CD8-positive, alpha-beta T cell (primary cell): ENCODE measurements at regions of chr12 and their contacts with region 1.

Region 1: DNA sequence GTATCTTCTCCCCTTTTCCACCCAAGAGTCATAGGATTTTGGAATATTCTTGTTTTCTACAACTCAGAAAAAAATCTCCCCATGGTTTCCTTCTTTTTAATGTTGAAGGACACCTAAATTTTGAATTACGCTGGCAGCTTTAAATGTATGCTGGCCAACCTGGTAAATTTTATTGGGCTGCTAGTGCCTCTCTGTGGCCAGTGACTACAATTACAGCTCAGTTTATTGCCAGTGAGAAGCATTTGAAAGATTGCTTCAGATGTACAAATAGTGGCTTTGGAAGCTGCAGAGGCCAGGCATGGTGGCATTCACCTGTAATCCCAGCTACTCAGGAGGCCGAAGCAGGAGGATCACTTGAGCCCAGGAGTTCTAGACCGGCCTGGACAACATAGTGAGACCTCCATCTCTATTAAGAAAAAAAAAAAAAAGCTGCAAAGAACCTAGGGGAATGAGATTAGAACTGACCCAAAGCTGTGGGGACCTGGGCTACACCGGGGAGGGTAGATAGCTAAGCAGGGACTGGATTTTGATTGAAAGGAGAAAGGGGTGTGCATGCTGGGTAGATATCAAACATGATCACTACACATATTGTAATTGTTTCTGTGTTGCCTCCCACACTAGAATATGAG is 7.6 kb upstream of the RAB21 start:
- DNase-seq: peak in 8 of 9 experiments; percentile 21 to 78 (median 46)
- ATAC-seq: peak; percentile 98
- H3K4me3 ChIP-seq: no peak overlapping the region
- H3K4me3 Mint-ChIP-seq: no peak overlapping the region
- H3K27ac ChIP-seq: no peak overlapping the region
- H3K27ac Mint-ChIP-seq: no peak overlapping the region
- H3K4me1 ChIP-seq: no peaks in the 10 kb centered on the region
- H3K4me1 Mint-ChIP-seq: no peaks in the 10 kb centered on the region
- H3K27me3 ChIP-seq: no peaks in the 10 kb centered on the region
- H3K27me3 Mint-ChIP-seq: peaks cover 18% of the 10 kb centered on the region
- CTCF ChIP-seq: peak; percentile 91

Region 2: DNA sequence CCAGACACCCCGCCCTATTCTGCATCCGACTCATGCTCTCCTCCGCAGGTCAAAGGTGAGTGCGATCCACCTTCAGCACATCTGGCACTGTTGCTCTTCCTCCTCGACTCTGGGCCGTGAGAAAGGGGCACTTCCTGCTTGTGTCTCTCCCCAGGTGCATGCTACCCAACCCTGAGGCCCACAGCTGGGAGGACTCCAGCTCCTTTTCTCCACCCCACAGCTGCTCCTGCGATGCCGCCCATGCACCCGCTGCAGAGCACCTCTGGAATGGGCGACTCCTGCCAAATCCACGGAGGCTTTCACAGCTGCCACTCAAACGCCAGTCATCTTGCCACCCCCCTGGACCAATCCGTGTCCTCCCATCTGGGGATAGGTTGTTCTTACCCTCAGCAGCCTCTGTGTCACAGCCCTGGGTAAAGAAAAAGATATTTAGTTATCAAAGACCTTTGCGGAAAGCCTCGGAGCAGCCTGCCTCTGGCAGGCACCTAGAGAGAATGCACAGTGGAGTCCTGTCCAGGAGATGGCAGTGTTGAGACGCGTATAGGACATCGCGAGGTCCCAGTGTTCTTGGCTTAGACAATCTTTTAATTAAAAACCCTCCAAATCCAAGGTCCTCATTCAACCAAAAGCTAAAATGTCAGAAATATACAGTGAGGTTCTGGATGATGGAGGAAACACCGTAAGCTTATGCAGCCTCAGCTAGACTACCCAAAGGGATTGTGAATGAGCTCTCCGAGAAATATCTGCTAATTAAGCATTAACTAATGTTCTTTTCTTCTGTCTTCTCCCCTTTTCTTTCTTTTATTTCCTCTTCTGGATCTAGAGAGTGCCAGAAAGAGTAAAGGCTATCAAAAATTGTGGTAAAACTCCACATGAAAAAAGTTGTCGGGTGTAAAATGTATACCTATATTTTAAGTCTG is 1867.8 kb before region 1 on chr12:
- CTCF ChIA-PET with region 1: no interaction called
- POLR2A ChIA-PET with region 1: no interaction called
- intact Hi-C with region 1: loop called in 1 of 2 experiments (anchors 5 kb)
- DNase-seq: peak; percentile 18 to 73 (median 63)
- ATAC-seq: peak; percentile 73
- H3K4me3 ChIP-seq: no peak overlapping the region
- H3K4me3 Mint-ChIP-seq: no peak overlapping the region
- H3K27ac ChIP-seq: no peak overlapping the region
- H3K27ac Mint-ChIP-seq: no peak overlapping the region
- H3K4me1 ChIP-seq: no peaks in the 10 kb centered on the region
- H3K4me1 Mint-ChIP-seq: peaks cover 4% of the 10 kb centered on the region
- H3K27me3 ChIP-seq: no peaks in the 10 kb centered on the region
- H3K27me3 Mint-ChIP-seq: peaks cover 25% of the 10 kb centered on the region
- CTCF ChIP-seq: peak; percentile 91

Region 3: GRCh38 chr12:70110085-70110484 is 1637.0 kb before region 1 on chr12:
- CTCF ChIA-PET with region 1: no interaction called
- POLR2A ChIA-PET with region 1: no interaction called
- intact Hi-C with region 1: no loop called
- DNase-seq: no peak
- ATAC-seq: no peak
- H3K4me3 ChIP-seq: no peak overlapping the region
- H3K4me3 Mint-ChIP-seq: no peak overlapping the region
- H3K27ac ChIP-seq: no peak overlapping the region
- H3K27ac Mint-ChIP-seq: no peak overlapping the region
- H3K4me1 ChIP-seq: no peaks in the 10 kb centered on the region
- H3K4me1 Mint-ChIP-seq: no peaks in the 10 kb centered on the region
- H3K27me3 ChIP-seq: no peaks in the 10 kb centered on the region
- H3K27me3 Mint-ChIP-seq: no peaks in the 10 kb centered on the region
- CTCF ChIP-seq: no peak

Region 4: DNA sequence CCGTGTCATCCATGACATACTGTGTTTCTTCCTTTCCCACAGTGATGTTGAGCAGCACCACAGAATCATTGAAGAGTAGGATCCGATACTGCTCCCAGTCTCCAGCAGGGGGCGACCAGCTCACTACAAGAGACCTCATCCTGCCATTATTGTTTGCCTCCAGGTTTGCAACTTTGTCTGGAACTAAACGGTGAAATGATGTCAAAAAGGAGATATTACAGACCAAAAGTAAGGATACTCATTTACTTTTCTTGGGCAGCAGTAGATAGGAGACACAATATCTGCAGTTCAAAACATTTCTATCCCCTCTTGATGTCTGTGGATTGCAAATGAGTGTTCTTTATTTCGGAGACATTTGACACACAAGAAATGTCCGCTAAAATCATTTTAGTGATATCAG is 1157.0 kb before region 1 on chr12:
- CTCF ChIA-PET with region 1: interaction called, 3 read pairs
- POLR2A ChIA-PET with region 1: no interaction called
- intact Hi-C with region 1: loop called in 1 of 2 experiments (anchors 2 kb)
- DNase-seq: peak in 8 of 9 experiments; percentile 8 to 58 (median 52)
- ATAC-seq: no peak
- H3K4me3 ChIP-seq: no peak overlapping the region
- H3K4me3 Mint-ChIP-seq: no peak overlapping the region
- H3K27ac ChIP-seq: no peak overlapping the region
- H3K27ac Mint-ChIP-seq: no peak overlapping the region
- H3K4me1 ChIP-seq: no peaks in the 10 kb centered on the region
- H3K4me1 Mint-ChIP-seq: no peaks in the 10 kb centered on the region
- H3K27me3 ChIP-seq: no peaks in the 10 kb centered on the region
- H3K27me3 Mint-ChIP-seq: peaks cover 8% of the 10 kb centered on the region
- CTCF ChIP-seq: peak; percentile 60

Region 5: GRCh38 chr12:71216725-71217579 is 530.1 kb before region 1 on chr12:
- CTCF ChIA-PET with region 1: no interaction called
- POLR2A ChIA-PET with region 1: no interaction called
- intact Hi-C with region 1: loop called (anchors 5 to 10 kb)
- DNase-seq: peak in 1 of 9 experiments; percentile 7
- ATAC-seq: no peak
- H3K4me3 ChIP-seq: no peak overlapping the region
- H3K4me3 Mint-ChIP-seq: no peak overlapping the region
- H3K27ac ChIP-seq: no peak overlapping the region
- H3K27ac Mint-ChIP-seq: no peak overlapping the region
- H3K4me1 ChIP-seq: no peaks in the 10 kb centered on the region
- H3K4me1 Mint-ChIP-seq: no peaks in the 10 kb centered on the region
- H3K27me3 ChIP-seq: no peaks in the 10 kb centered on the region
- H3K27me3 Mint-ChIP-seq: no peaks in the 10 kb centered on the region
- CTCF ChIP-seq: no peak

Region 6: DNA sequence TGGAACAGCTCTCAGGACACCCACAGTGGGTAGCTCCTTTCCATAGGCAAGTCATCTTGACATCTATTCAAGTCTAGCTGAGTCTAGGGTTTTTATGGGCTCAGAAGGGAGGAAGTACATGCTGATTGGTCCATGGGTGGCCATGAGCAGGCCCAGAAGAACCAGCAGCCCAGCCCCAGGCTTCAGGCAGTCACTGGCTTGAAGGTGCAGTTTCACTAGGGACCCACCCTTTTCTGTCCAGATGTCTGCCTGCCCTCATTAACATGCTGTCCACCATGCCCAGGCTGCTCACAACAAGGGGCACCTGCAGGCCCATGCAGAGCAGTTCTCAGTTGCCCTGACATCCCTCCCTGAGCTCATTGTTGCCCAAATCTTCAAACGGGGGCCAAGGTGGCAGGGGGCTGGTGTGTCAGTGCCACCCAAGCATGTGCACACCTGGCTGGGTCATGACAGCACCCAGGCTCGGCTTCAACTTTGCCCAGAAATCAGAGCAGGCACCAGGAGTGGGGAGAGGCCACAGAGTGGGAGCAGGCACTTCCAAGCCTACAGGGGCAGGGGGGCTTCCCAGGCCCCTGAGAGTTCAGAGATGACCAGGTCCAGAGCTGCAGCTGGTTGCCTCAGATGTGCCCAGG is 326.2 kb before region 1 on chr12:
- CTCF ChIA-PET with region 1: interaction called, 81 read pairs
- POLR2A ChIA-PET with region 1: interaction called, 6 read pairs
- intact Hi-C with region 1: loop called in 1 of 2 experiments (anchors 1 kb)
- DNase-seq: no peak
- ATAC-seq: no peak
- H3K4me3 ChIP-seq: no peak overlapping the region
- H3K4me3 Mint-ChIP-seq: no peak overlapping the region
- H3K27ac ChIP-seq: no peak overlapping the region
- H3K27ac Mint-ChIP-seq: no peak overlapping the region
- H3K4me1 ChIP-seq: no peaks in the 10 kb centered on the region
- H3K4me1 Mint-ChIP-seq: no peaks in the 10 kb centered on the region
- H3K27me3 ChIP-seq: no peaks in the 10 kb centered on the region
- H3K27me3 Mint-ChIP-seq: peaks cover 9% of the 10 kb centered on the region
- CTCF ChIP-seq: no peak

Region 7: DNA sequence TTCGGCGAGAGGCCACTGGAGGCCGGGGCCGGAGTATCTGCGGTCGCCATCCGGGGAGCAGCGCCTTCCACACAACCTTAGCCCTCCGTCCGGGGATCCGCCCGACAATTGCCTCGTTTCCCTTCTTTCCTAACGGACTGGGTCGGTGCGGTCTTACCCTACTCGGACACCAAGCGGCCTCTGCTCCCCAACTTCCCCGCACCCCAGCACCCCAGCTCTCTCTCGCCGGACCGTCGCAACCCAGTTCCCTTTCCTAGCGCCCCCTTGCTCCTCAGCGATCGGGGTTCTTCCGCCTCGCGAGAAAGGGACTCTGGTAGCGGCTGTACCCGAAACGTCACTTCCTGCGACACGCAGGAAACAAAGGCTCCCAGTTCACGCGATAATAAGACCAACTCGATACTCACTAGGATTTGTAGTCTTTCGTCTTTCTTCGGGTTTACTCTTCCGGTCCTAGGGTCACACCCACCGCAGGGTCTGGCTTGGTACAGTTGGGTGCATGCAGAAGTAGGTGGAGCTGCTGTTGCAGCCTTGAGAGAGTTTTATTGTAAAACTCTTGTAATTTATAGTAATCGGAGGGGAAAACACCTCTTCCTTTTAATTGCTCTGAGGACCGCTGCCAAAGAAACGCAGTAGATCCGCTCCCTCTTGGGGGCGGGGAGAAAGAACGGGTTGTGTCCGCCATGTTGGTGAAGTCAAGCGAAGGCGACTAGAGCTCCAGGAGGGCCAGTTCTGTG is 83.4 kb before region 1 on chr12 and contains the start of gene ZFC3H1:
- CTCF ChIA-PET with region 1: interaction called, 13 read pairs
- POLR2A ChIA-PET with region 1: interaction called, 12 read pairs
- intact Hi-C with region 1: loop called in 1 of 2 experiments (anchors 2 kb)
- DNase-seq: peak; percentile 76 to 99 (median 88)
- ATAC-seq: peak; percentile 74
- H3K4me3 ChIP-seq: peak within 1 kb of the TSS; percentile 79 to 94
- H3K4me3 Mint-ChIP-seq: peak within 1 kb of the TSS; percentile 100
- H3K27ac ChIP-seq: peak within 1 kb of the TSS; percentile 92 to 97
- H3K27ac Mint-ChIP-seq: peak within 1 kb of the TSS; percentile 100
- H3K4me1 ChIP-seq: peaks cover 36% of the 10 kb centered on the region
- H3K4me1 Mint-ChIP-seq: peaks cover 55% of the 10 kb centered on the region
- H3K27me3 ChIP-seq: no peaks in the 10 kb centered on the region
- H3K27me3 Mint-ChIP-seq: no peaks in the 10 kb centered on the region
- CTCF ChIP-seq: no peak
- total RNA-seq, gene ZFC3H1: 118 to 121 TPM

Region 8: DNA sequence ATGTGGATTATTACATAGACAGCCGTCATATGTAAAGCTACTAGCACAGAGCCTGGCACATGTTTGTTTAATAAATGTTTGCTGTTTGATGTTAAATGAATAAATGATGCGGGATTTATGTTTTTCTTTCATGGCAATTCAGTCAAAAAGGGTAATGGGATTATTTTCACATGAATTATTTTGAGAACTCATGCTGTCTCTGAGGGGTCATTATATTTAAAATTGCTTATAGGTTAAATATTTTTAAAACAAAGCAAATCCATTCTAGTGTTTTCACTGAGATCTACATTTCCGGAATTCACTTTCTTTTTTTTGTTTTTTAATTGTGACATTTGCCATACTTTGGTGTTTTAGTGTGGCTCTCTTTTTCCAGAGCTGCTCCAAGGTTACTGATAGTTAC is 12.8 kb after region 1 on chr12:
- CTCF ChIA-PET with region 1: interaction called, 10 read pairs
- POLR2A ChIA-PET with region 1: interaction called, 4 read pairs
- intact Hi-C with region 1: no loop called
- DNase-seq: no peak
- ATAC-seq: no peak
- H3K4me3 ChIP-seq: no peak overlapping the region
- H3K4me3 Mint-ChIP-seq: no peak overlapping the region
- H3K27ac ChIP-seq: no peak overlapping the region
- H3K27ac Mint-ChIP-seq: no peak overlapping the region
- H3K4me1 ChIP-seq: peaks cover 22% of the 10 kb centered on the region
- H3K4me1 Mint-ChIP-seq: peaks cover 65% of the 10 kb centered on the region
- H3K27me3 ChIP-seq: no peaks in the 10 kb centered on the region
- H3K27me3 Mint-ChIP-seq: no peaks in the 10 kb centered on the region
- CTCF ChIP-seq: no peak